ENCODE measurements at regions of chr16 and their contacts with region 1.

Region 1: DNA sequence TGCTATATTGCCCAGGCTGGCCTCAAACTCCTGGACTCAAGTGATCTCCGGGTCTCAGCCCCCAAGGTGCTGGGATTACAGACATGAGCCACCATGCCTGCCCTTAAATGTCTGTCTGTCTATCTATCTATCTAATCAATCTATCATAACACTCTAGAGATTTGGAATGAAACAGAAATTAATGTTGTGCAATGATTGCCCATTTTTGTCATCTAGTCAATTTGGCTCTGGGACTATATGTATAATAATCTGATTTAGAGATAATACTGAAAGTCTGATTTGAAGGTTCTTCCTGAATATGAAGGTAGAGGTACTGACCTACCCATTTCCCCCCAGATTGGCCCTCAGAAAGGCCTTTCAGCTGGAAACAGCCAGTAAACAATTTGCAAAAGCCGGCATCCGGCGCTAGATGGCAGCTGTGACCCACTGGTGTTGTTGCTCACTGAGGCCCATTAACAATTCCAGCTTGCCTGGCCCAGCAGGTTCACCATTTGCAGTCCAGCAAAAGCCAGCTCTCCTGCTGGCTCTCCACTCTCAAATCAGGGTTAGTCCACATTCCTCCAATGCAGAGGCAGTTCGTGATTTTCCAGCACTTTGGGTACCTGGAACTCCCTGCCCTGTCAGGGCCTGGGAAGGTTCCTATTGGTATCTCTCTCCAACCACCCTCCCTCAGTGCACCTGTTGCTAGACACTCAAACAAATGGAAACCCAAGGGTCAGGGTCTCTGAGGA is 22.9 kb upstream of the C16orf87 start:
- DNase-seq: peak; percentile 36
- H3K4me3 ChIP-seq: no peak overlapping the region
- H3K27ac ChIP-seq: no peak overlapping the region
- H3K27me3 ChIP-seq: peaks cover 4% of the 10 kb centered on the region
- CTCF ChIP-seq: peak; percentile 93

Region 2: DNA sequence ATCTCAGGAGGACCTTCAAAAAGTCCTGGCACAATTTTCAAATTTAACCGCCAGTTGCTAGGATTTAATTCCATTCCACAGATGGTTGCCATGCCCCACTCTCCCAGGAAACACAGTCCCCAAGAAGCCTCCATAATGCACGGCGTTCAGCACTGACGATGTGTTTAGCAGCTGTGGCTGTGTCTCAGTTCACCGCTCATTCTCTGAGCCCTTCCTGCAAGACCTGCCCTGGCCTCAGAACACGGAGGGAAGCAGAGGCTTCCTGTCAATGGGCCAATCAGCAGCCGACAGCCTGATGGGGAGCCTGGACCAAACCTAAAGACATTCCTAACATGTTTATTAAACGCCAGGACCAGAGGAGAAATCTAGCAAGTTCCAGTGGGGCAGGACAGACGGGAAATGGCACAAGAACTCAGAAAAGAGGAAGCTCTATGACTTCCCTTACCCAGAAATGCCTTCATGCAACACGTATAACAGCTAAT is 110.6 kb before region 1 on chr16:
- CTCF ChIA-PET with region 1: no interaction called
- POLR2A ChIA-PET with region 1: no interaction called
- DNase-seq: no peak
- H3K4me3 ChIP-seq: no peak overlapping the region
- H3K27ac ChIP-seq: no peak overlapping the region
- H3K27me3 ChIP-seq: no peaks in the 10 kb centered on the region
- CTCF ChIP-seq: no peak

Region 3: GRCh38 chr16:46763147-46763546 is 90.7 kb before region 1 on chr16:
- CTCF ChIA-PET with region 1: no interaction called
- POLR2A ChIA-PET with region 1: no interaction called
- DNase-seq: no peak
- H3K4me3 ChIP-seq: no peak overlapping the region
- H3K27ac ChIP-seq: no peak overlapping the region
- H3K27me3 ChIP-seq: peaks cover 13% of the 10 kb centered on the region
- CTCF ChIP-seq: no peak

Region 4: GRCh38 chr16:46873201-46873600 is 19.3 kb after region 1 on chr16:
- CTCF ChIA-PET with region 1: interaction called, 29 read pairs
- POLR2A ChIA-PET with region 1: no interaction called
- DNase-seq: no peak
- H3K4me3 ChIP-seq: no peak overlapping the region
- H3K27ac ChIP-seq: no peak overlapping the region
- H3K27me3 ChIP-seq: peaks cover 2% of the 10 kb centered on the region
- CTCF ChIP-seq: no peak

Region 5: GRCh38 chr16:46889942-46890300 is 36.0 kb after region 1 on chr16:
- CTCF ChIA-PET with region 1: interaction called, 18 read pairs
- POLR2A ChIA-PET with region 1: no interaction called
- DNase-seq: no peak
- H3K4me3 ChIP-seq: no peak overlapping the region
- H3K27ac ChIP-seq: no peak overlapping the region
- H3K27me3 ChIP-seq: no peaks in the 10 kb centered on the region
- CTCF ChIP-seq: no peak

Region 6: GRCh38 chr16:46908540-46909372 is 54.9 kb after region 1 on chr16:
- CTCF ChIA-PET with region 1: interaction called, 187 read pairs
- POLR2A ChIA-PET with region 1: interaction called, 7 read pairs
- DNase-seq: peak; percentile 30
- H3K4me3 ChIP-seq: no peak overlapping the region
- H3K27ac ChIP-seq: no peak overlapping the region
- H3K27me3 ChIP-seq: no peaks in the 10 kb centered on the region
- CTCF ChIP-seq: peak; percentile 67

Region 7: DNA sequence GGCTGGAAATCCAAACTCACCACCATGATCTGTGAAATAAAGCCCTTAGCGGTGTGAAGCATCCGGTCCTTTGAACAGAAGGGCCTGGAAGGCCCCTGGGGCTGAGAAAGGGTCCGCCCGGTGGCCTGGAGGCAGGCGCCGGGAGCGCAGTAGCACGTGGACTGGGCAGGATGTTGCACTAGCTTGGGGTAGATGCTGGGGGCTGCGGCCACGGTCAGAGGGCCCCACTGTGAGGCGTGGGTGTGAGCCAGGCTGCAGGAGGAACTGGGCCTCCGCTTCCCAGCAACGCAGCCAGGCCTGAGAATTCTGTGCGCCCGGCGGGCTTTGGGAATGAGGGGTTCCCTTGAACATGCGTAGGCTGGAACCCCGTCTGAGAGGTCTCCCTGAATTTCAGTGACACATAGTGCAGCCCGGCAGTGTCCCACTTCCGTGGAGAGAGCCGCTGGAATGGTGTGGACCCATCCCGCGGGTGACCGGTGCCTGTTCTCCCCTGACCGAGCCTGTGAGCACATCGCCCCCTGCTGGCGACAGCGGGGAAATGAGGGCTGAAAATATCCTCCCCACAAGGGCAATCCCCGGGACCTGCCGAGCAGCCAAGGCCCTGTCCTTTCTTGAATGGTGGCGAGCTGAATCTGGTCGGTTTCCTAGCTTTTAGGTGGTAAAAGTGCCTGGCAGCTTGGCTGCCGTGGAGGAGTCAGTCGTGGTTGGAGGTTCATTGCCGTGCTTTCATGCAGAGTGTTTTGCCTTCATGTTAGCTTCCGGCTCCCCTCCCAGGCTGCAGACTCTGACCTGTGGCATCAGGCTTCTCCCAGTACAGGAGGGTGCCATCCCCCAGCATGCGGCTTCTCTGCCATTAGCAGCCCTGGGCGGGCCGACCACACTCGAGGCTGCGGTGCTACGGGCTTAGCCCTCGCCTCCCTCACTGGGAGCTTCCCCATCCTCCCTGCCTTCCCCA is 75.8 kb after region 1 on chr16:
- CTCF ChIA-PET with region 1: interaction called, 58 read pairs
- POLR2A ChIA-PET with region 1: no interaction called
- DNase-seq: peak; percentile 11
- H3K4me3 ChIP-seq: no peak overlapping the region
- H3K27ac ChIP-seq: no peak overlapping the region
- H3K27me3 ChIP-seq: no peaks in the 10 kb centered on the region
- CTCF ChIP-seq: peak; percentile 87